OCI-LY7 (cell line): ENCODE measurements at regions of chr6 and their contacts with region 1.

Region 1: GRCh38 chr6:37499433-37500293 is at the start of gene CCDC167:
- DNase-seq: peak; percentile 98
- H3K4me3 ChIP-seq: peak within 1 kb of the TSS; percentile 84
- H3K27ac ChIP-seq: peak within 1 kb of the TSS; percentile 49
- H3K4me1 ChIP-seq: peaks cover 52% of the 10 kb centered on the region
- CTCF ChIP-seq: no peak
- total RNA-seq, gene CCDC167: 138 and 153 TPM in 2 replicates

Region 2: GRCh38 chr6:35876902-35877301 is 1622.8 kb before region 1 on chr6:
- CTCF ChIA-PET with region 1: no interaction called
- POLR2A ChIA-PET with region 1: no interaction called
- intact Hi-C with region 1: no loop called
- DNase-seq: no peak
- H3K4me3 ChIP-seq: no peak overlapping the region
- H3K27ac ChIP-seq: no peak overlapping the region
- H3K4me1 ChIP-seq: no peaks in the 10 kb centered on the region
- CTCF ChIP-seq: no peak

Region 3: DNA sequence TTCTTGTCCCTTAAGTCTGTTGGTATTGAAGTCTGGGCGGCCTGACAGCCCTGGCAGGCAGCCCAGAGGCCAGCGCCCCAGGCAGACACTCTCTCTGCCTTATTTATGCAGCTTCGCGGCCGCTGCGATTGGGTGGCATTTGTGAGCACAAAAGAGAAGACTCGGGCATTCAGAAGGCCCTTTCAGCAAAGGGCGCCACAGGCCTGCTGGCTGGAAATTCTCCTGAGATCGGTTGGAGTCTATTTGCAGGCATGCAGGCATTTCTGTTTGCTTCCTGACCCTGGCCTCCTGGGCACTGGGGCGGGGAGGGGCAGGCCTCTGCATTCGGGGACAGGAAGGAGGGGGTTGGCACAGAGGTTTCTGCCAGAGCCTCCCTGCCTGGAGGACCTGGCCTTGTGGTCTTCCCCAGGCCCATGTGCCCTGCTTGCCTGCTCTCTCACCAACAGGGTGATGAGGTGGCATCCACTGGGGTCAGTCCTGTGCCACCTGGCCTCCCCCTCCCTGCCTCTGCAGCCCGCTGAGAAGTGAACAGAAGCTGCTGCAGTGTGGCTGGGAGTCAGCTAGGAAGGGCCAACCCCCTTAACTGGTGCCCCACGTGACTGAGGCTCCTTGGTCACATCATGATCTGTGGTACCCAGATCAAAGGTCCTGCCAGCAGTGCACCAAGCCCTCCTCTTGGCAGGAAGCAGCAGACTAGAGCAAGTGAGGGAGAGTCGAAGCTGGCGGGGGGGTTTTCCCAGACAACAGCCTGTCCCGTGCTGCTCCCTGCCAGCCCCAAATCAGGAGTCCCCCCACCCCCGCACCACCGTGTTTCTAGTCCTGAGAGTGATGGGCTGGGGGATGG is 16.6 kb after region 1 on chr6:
- CTCF ChIA-PET with region 1: interaction called, 5 read pairs
- POLR2A ChIA-PET with region 1: interaction called, 16 read pairs
- intact Hi-C with region 1: no loop called
- DNase-seq: peak; percentile 59
- H3K4me3 ChIP-seq: no peak overlapping the region
- H3K27ac ChIP-seq: no peak overlapping the region
- H3K4me1 ChIP-seq: peaks cover 13% of the 10 kb centered on the region
- CTCF ChIP-seq: no peak

Region 4: GRCh38 chr6:37547564-37548061 is 48.0 kb after region 1 on chr6:
- CTCF ChIA-PET with region 1: interaction called, 3 read pairs
- POLR2A ChIA-PET with region 1: interaction called, 4 read pairs
- intact Hi-C with region 1: loop called (anchors 5 kb)
- DNase-seq: peak; percentile 76
- H3K4me3 ChIP-seq: no peak overlapping the region
- H3K27ac ChIP-seq: peak overlapping the region; percentile 49
- H3K4me1 ChIP-seq: peaks cover 50% of the 10 kb centered on the region
- CTCF ChIP-seq: no peak

Region 5: DNA sequence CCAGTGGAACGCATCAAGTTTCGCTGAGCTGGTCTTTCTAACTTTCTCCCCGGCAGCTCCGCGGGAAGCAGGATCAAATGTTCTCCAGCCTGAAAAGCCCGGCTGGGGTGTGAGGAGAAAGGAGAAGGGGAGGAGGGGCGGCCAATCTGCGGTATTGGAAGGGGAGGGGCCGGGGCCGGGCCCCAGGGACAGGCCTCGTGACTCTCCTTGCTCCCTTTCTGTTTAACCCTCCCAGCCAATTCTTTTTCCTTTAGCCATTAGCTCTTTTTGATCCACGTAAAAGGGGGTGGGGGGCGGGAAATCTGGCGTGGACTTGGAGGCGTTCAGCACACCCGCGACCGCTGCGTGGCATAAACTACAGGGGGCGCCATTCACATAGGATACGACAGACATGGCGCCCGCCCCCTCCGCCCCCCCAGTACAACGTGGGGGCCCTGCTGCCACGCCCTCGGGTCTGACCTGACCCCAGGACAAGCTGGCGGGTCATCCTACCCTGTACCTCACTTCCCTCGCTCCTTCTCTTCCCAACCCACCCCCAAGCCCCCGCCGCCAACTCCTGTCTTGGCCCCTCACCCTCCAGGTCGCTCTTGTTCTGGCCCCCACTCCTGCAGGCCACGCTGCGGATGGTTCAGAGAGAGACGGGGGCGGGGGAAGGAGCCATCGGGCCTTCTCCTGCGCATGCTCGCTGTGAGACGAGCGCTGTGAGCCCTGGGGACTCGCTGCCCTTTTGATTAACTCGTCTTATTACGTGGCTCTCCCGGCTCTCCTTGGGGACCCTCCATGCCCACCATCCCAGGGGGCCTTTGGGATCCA is 205.8 kb after region 1 on chr6:
- CTCF ChIA-PET with region 1: no interaction called
- POLR2A ChIA-PET with region 1: no interaction called
- intact Hi-C with region 1: no loop called
- DNase-seq: no peak
- H3K4me3 ChIP-seq: no peak overlapping the region
- H3K27ac ChIP-seq: no peak overlapping the region
- H3K4me1 ChIP-seq: no peaks in the 10 kb centered on the region
- CTCF ChIP-seq: peak; percentile 38; the same call in 1 of the 2 replicates